WTC11 (cell line): ENCODE measurements at regions of chr10 and their contacts with region 1.

Region 1: DNA sequence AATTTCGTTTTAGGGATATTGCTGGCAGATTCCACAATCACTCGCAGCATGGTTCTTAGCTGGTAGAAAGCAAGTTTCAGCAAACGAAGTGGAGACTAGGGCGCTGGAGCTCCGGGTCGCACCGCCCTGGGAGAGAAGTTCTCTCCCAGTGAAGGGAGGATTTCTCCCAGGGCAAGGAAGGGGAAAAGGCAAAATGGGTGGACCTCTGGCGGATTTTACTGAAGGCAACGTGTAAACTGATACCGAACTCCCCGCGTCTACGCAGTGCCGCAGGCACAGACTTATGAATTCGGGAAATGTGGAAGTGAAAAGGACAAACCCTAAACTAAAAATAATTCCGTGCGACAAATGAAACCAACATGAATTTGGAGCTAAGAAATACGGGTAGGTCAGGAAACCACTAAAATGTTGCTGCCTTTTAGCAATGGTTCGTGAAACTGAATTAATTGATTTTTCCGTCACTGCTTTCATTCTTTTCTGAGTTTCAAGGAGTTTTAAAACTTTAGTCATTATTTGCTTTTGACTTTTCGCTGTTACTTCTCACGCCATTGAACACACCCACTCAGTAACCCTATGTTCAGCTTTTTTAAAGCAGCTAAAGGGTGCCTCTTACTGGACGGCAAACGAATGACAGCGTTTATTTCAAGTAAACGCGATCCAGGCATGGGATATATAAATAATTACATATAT is at the start of gene MYOF:
- DNase-seq: peak; percentile 35
- ATAC-seq: peak; percentile 76
- H3K4me3 Mint-ChIP-seq: peak within 1 kb of the TSS; percentile 86
- H3K27ac Mint-ChIP-seq: 0 out of 2 replicates have a peak within 1 kb of the TSS, but pooled peaks have one; percentile 17
- H3K4me1 Mint-ChIP-seq: peaks cover 18% of the 10 kb centered on the region
- H3K27me3 Mint-ChIP-seq: peaks cover 16% of the 10 kb centered on the region
- CTCF ChIP-seq: no peak; the same call in 1 of the 2 replicates
- total RNA-seq, gene MYOF: 1.4 to 2.2 TPM (median 1.8 TPM) in 3 replicates

Region 2: GRCh38 chr10:93074147-93074596 is 408.1 kb before region 1 on chr10:
- CTCF ChIA-PET with region 1: interaction called, 13 read pairs
- POLR2A ChIA-PET with region 1: no interaction called
- DNase-seq: peak; percentile 65
- ATAC-seq: peak; percentile 23
- H3K4me3 Mint-ChIP-seq: peak overlapping the region; percentile 89
- H3K27ac Mint-ChIP-seq: no peak overlapping the region
- H3K4me1 Mint-ChIP-seq: peaks cover 43% of the 10 kb centered on the region
- H3K27me3 Mint-ChIP-seq: peaks cover 92% of the 10 kb centered on the region
- CTCF ChIP-seq: no peak

Region 3: DNA sequence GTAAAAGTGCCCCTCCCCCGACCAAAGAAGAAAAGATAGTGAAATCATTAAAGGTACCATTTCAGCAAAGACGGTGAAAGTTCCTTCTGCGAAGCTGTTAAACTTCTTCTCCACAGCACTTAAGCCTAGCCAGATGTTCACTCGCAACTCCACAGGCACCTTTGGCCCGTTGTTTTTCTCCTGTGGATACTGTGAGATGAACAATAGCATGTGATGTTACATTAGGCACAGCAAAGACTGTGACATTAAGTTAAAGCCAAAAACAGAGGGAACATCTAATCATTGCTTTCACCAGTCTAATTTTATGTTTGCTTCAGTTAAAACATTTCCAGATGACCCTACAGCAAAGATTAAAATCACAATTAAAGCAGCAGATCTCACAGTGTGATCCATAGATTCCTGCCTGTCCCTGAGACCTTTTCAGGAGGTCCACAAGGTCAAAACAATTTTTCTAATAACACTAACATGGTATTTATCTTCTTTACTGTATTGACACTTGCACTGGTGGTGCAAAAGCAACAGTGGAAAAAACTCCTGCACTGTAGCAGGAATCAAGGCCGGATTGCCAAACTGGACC is 112.6 kb before region 1 on chr10:
- CTCF ChIA-PET with region 1: interaction called, 17 read pairs
- POLR2A ChIA-PET with region 1: no interaction called
- DNase-seq: no peak
- ATAC-seq: no peak
- H3K4me3 Mint-ChIP-seq: no peak overlapping the region
- H3K27ac Mint-ChIP-seq: no peak overlapping the region
- H3K4me1 Mint-ChIP-seq: peaks cover 16% of the 10 kb centered on the region
- H3K27me3 Mint-ChIP-seq: no peaks in the 10 kb centered on the region
- CTCF ChIP-seq: no peak

Region 4: DNA sequence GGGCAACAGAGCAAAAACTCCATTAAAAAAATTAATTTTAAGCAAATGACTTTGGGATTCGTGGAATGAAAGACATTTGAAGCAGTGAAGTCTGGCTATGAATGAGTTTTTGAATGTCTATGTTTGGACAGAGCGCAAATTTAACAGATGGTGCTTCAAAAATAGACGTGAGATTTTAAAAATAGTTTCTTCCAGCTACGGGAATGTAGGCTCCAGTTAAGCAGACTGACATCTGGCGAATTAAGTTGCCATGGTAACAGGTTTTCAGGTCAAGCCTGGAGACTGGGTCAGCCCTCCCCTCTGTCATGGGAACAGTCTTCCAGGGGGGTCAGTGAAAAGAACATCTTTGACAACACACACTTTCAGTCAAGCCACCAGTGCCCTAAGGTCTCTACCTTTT is 62.2 kb before region 1 on chr10:
- CTCF ChIA-PET with region 1: interaction called, 25 read pairs
- POLR2A ChIA-PET with region 1: no interaction called
- DNase-seq: no peak
- ATAC-seq: peak; percentile 32
- H3K4me3 Mint-ChIP-seq: no peak overlapping the region
- H3K27ac Mint-ChIP-seq: peak overlapping the region; percentile 52; the same call in 1 of the 2 replicates
- H3K4me1 Mint-ChIP-seq: peaks cover 39% of the 10 kb centered on the region
- H3K27me3 Mint-ChIP-seq: no peaks in the 10 kb centered on the region
- CTCF ChIP-seq: no peak

Region 5: GRCh38 chr10:93445097-93445960 is 37.0 kb before region 1 on chr10:
- CTCF ChIA-PET with region 1: interaction called, 33 read pairs
- POLR2A ChIA-PET with region 1: interaction called, 12 read pairs
- DNase-seq: peak; percentile 96
- ATAC-seq: peak; percentile 99
- H3K4me3 Mint-ChIP-seq: peak overlapping the region; percentile 27; the same call in 1 of the 2 replicates
- H3K27ac Mint-ChIP-seq: peak overlapping the region; percentile 99
- H3K4me1 Mint-ChIP-seq: peaks cover 56% of the 10 kb centered on the region
- H3K27me3 Mint-ChIP-seq: no peaks in the 10 kb centered on the region
- CTCF ChIP-seq: no peak

Region 6: DNA sequence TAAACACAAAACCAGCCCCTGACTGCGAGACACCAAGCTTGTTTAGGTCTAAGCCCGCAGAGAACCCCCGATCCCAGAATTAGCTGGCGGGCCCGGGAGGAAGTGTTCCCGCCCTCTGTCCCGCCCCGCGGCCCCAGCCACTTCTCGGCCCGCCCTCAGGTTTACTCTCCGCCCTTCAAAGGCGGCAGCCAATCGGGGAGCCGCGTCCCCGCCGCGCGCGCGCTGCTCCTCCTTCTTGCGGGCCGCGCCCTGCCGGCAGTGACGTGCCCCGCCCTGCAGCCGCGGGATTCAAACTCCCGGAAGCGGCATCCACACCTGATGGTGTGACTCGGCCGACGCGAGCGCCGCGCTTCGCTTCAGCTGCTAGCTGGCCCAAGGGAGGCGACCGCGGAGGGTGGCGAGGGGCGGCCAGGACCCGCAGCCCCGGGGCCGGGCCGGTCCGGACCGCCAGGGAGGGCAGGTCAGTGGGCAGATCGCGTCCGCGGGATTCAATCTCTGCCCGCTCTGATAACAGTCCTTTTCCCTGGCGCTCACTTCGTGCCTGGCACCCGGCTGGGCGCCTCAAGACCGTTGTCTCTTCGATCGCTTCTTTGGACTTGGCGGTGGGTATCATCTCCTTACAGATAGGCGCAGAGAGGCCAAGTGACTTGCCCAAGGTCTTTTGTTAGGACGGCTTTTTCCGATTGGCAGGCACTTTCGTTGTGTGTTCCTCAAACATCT is 14.2 kb after region 1 on chr10 and contains the start of gene CEP55:
- CTCF ChIA-PET with region 1: interaction called, 17 read pairs
- POLR2A ChIA-PET with region 1: no interaction called
- DNase-seq: peak; percentile 97
- ATAC-seq: peak; percentile 99
- H3K4me3 Mint-ChIP-seq: peak within 1 kb of the TSS; percentile 92
- H3K27ac Mint-ChIP-seq: peak within 1 kb of the TSS; percentile 79
- H3K4me1 Mint-ChIP-seq: peaks cover 25% of the 10 kb centered on the region
- H3K27me3 Mint-ChIP-seq: peaks cover 17% of the 10 kb centered on the region
- CTCF ChIP-seq: no peak
- total RNA-seq, gene CEP55: 15.7 to 17.3 TPM (median 15.8 TPM) in 3 replicates

Region 7: DNA sequence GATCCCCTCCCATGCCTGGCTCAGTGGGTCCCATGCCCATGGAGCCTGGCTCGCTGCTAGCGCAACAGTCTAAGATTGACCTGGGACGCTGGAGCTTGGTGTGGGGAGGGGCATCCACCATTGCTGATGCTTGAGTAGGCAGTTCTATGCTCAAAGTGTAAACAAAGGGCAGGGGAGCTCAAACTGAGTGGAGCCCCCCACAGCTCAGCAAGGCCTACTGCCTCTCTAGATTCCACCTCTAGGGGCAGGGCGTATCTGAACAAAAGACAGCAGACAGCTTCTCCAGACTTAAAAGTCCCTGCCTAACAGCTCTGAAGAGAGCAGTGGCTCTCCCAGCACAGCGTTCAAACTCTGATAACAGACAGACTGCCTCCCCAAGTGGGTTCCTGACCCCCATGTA is 53.0 kb after region 1 on chr10:
- CTCF ChIA-PET with region 1: no interaction called
- POLR2A ChIA-PET with region 1: no interaction called
- DNase-seq: peak; percentile 44
- ATAC-seq: peak; percentile 85
- H3K4me3 Mint-ChIP-seq: no peak overlapping the region
- H3K27ac Mint-ChIP-seq: no peak overlapping the region
- H3K4me1 Mint-ChIP-seq: 0 out of 2 replicates have a peak, but pooled peaks cover 2% of the 10 kb centered on the region
- H3K27me3 Mint-ChIP-seq: peaks cover 33% of the 10 kb centered on the region
- CTCF ChIP-seq: no peak

Region 8: DNA sequence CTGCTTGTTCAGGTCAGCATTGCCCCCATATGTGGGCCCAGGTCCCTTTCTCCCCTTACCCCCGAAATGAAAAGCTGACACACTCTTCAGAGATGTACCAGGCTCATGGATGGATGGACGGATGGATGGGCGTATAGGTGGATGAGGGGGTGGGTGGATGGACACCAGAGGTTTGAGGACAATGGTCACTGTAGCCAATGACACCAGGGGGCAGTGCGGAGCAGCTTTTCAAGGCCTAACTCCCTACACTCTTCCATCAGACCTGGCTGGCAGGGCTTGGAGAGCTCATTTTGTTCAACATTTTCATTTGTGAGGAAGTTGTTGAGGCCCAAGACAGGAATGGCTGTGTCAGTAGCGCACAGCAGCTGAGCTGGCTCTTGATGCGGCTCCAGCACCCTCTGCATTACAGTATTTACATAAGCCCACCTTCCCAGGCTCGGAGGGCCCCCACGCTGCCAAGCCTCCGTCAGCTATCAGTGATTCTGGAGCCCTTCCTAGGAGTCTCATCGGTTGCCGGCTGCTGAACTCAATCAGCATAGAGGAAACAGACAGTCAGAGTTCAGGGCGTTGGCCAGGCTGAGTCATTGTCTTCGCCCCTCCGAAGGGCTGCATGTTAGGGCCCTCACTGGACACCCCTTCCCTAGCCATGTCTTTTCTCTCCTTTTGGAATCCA is 72.6 kb after region 1 on chr10:
- CTCF ChIA-PET with region 1: interaction called, 14 read pairs
- POLR2A ChIA-PET with region 1: no interaction called
- DNase-seq: peak; percentile 85
- ATAC-seq: peak; percentile 95
- H3K4me3 Mint-ChIP-seq: 0 out of 2 replicates have a peak overlapping the region, but pooled peaks have one; percentile 0
- H3K27ac Mint-ChIP-seq: no peak overlapping the region
- H3K4me1 Mint-ChIP-seq: peaks cover 11% of the 10 kb centered on the region
- H3K27me3 Mint-ChIP-seq: no peaks in the 10 kb centered on the region
- CTCF ChIP-seq: peak; percentile 71